ENCODE measurements at regions of chr9 and their contacts with region 1.

Region 1: GRCh38 chr9:131739980-131740648 is at the start of gene RAPGEF1:
- DNase-seq: peak; percentile 72 to 92 (median 78)
- ATAC-seq: peak; percentile 54 to 82 (median 68)
- H3K4me3 ChIP-seq: peak within 1 kb of the TSS; percentile 29 to 93 (median 72)
- H3K27ac ChIP-seq: peak within 1 kb of the TSS; percentile 80 to 96 (median 88)
- H3K4me1 ChIP-seq: peaks cover 3 to 55% (median 37%) of the 10 kb centered on the region in 12 donors
- H3K27me3 ChIP-seq: no peaks in the 10 kb centered on the region
- CTCF ChIP-seq: peak; percentile 69 to 96 (median 87)
- POLR2A ChIP-seq: no peak
- total RNA-seq, gene RAPGEF1: 81.9 to 161 (median 116) TPM

Region 2: GRCh38 chr9:131349881-131350563 is 390.1 kb before region 1 on chr9:
- intact Hi-C with region 1: loop called in 6 of 10 experiments (anchors 5 to 10 kb)
- DNase-seq: peak; percentile 87 to 96 (median 92)
- ATAC-seq: peak; percentile 87 to 97 (median 96)
- H3K4me3 ChIP-seq: peak overlapping the region in 10 of 12 donors; percentile 8 to 49 (median 33)
- H3K27ac ChIP-seq: peak overlapping the region in 1 of 12 donors; percentile 3
- H3K4me1 ChIP-seq: peaks cover 0 to 16% (median 8%) of the 10 kb centered on the region in 12 donors
- H3K27me3 ChIP-seq: no peaks in the 10 kb centered on the region
- CTCF ChIP-seq: peak; percentile 77 to 95 (median 88)
- POLR2A ChIP-seq: no peak

Region 3: GRCh38 chr9:131524578-131525315 is 215.4 kb before region 1 on chr9:
- intact Hi-C with region 1: loop called in 2 of 10 experiments (anchors 10 kb)
- DNase-seq: no peak
- ATAC-seq: no peak
- H3K4me3 ChIP-seq: no peak overlapping the region
- H3K27ac ChIP-seq: no peak overlapping the region
- H3K4me1 ChIP-seq: peaks cover 0 to 4% (median under 1%) of the 10 kb centered on the region in 12 donors
- H3K27me3 ChIP-seq: no peaks in the 10 kb centered on the region
- CTCF ChIP-seq: no peak
- POLR2A ChIP-seq: no peak

Region 4: DNA sequence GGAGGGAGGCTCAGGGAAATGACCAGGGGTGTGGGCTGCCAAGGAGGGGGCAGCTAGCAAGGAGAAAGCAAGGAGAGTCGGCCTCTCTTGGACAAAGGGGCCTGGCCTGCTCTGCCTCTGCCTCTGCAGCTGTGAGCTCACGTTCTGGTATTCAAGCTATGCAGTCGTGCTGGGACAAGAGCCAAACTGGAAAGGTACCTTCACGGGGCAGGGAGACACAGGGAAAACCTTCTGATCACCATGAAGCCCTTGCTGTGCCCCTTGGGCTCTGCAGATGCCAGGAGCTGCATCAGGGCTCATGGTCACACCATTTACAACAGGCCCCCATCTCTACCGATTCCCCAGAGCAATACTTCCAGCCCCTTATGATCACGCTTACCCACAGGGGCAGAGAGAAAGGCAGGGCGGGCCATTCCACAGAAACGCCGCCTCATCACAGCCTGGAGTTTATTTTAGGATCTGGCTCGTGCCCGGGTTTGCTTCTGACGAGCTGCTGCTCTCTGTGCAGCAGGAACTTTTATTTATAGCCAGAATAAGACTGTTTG is 131.5 kb before region 1 on chr9:
- intact Hi-C with region 1: loop called in 2 of 10 experiments (anchors 5 kb)
- DNase-seq: peak; percentile 71 to 90 (median 80)
- ATAC-seq: peak; percentile 73 to 81 (median 80)
- H3K4me3 ChIP-seq: peak overlapping the region in 5 of 12 donors; percentile 1 to 41 (median 19)
- H3K27ac ChIP-seq: peak overlapping the region; percentile 73 to 95 (median 84)
- H3K4me1 ChIP-seq: peaks cover 12 to 97% (median 59%) of the 10 kb centered on the region in 12 donors
- H3K27me3 ChIP-seq: no peaks in the 10 kb centered on the region
- CTCF ChIP-seq: no peak
- POLR2A ChIP-seq: no peak

Region 5: DNA sequence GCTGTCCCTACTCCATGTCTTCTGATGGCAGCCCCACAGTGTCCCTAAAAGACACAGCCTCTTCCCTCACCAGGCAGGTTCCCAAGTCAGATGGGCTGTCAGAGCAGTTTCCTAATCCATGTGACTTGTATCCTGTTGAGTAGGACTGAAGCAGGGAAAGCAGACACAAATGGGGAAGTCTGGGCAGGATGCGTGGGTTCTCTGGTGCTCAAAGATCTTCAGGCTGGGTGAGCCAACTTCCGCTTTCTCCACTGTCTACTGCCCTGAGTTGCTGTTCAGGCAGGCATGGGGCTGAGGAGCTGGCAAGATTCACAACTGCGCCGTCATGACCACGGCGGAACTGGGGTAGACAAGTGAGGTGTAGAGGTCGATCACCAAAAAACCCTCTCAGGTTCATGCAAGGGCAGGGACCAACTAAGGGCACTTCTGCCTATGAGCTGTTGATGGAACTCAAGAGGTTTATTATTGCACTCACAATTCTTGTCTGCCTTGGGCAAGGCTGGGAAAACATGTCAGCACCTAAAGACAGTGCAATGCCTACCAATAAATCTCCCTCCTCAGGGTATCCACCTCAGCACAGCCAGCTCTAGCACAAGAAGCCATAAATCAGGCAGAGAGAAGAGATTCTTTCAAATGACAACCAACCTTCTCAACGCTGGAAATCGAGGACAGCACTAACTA is 83.6 kb before region 1 on chr9:
- intact Hi-C with region 1: loop called in 1 of 10 experiments (anchors 10 kb)
- DNase-seq: peak; percentile 74 to 84 (median 79)
- ATAC-seq: peak; percentile 51 to 86 (median 69)
- H3K4me3 ChIP-seq: no peak overlapping the region
- H3K27ac ChIP-seq: peak overlapping the region in 9 of 12 donors; percentile 23 to 88 (median 36)
- H3K4me1 ChIP-seq: peaks cover 18 to 89% (median 67%) of the 10 kb centered on the region in 12 donors
- H3K27me3 ChIP-seq: no peaks in the 10 kb centered on the region
- CTCF ChIP-seq: no peak
- POLR2A ChIP-seq: no peak

Region 6: DNA sequence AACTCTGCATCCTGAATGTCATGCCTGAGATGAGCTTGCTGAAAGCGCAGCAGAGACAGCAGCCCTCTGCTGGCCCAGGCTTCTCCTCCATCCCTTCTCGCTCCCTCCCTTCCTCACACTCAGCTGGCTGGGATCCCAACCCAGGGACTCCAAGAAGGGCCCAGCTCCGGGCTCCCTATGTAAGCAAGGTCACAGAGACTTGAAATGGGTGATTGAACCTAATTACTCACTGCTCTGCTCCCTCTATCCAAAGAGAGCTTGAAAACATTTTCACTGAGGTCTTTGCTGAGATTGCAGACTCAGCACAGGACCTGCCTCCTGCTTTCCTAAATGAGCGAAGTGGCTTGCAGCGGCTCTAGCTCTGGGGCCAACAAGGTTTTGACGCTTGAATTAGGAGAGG is 43.0 kb before region 1 on chr9:
- intact Hi-C with region 1: loop called in 1 of 10 experiments (anchors 5 kb)
- DNase-seq: peak in 2 of 5 donors; percentile 55 to 72
- ATAC-seq: peak; percentile 24 to 62 (median 34)
- H3K4me3 ChIP-seq: no peak overlapping the region
- H3K27ac ChIP-seq: peak overlapping the region in 10 of 12 donors; percentile 47 to 93 (median 80)
- H3K4me1 ChIP-seq: peaks cover 11 to 99% (median 79%) of the 10 kb centered on the region in 12 donors
- H3K27me3 ChIP-seq: no peaks in the 10 kb centered on the region
- CTCF ChIP-seq: peak in 5 of 12 donors; percentile 11 to 42 (median 27)
- POLR2A ChIP-seq: no peak

Region 7: DNA sequence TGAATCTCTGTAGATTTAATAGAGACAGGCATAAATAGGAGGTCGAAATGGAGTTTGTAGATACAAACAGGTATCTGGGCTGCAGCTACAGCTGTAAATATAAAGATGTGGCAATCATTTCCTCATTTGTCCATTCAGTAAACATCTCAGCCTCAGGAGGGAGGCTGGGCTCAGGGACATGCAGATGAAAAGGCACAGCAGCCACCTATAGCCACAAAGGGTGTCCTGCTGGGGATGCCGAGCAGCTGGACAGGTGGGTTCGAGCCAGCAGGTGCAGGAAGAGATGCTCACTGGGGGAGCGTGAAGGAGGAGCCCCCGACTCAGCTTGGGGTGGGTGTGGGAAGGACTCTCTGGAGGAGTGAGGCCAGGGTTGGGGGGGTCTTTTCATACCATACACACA is 48.2 kb after region 1 on chr9:
- intact Hi-C with region 1: no loop called
- DNase-seq: no peak
- ATAC-seq: no peak
- H3K4me3 ChIP-seq: no peak overlapping the region
- H3K27ac ChIP-seq: no peak overlapping the region
- H3K4me1 ChIP-seq: no peaks in the 10 kb centered on the region
- H3K27me3 ChIP-seq: peaks cover 0 to 72% (median 10%) of the 10 kb centered on the region in 9 donors
- CTCF ChIP-seq: no peak
- POLR2A ChIP-seq: no peak

Region 8: GRCh38 chr9:132901856-132902831 is 1162.0 kb after region 1 on chr9:
- intact Hi-C with region 1: no loop called
- DNase-seq: peak in 4 of 5 donors; percentile 44 to 52 (median 48)
- ATAC-seq: peak; percentile 22 to 70 (median 68)
- H3K4me3 ChIP-seq: no peak overlapping the region
- H3K27ac ChIP-seq: no peak overlapping the region
- H3K4me1 ChIP-seq: peaks cover 0 to 16% (median 1%) of the 10 kb centered on the region in 12 donors
- H3K27me3 ChIP-seq: no peaks in the 10 kb centered on the region
- CTCF ChIP-seq: peak; percentile 79 to 96 (median 88)
- POLR2A ChIP-seq: no peak

Measured in heart left ventricle (tissue), 16 donors.